HEK293 (cell line): ENCODE measurements at regions of chr12 and their contacts with region 1.

Region 1: GRCh38 chr12:124906606-124907261 is 7.7 kb downstream of the UBC start:
- H3K4me3 ChIP-seq: no peak overlapping the region
- H3K27ac ChIP-seq: no peak overlapping the region
- H3K4me1 ChIP-seq: peaks cover 7% of the 10 kb centered on the region
- CTCF ChIP-seq: peak; percentile 86

Region 2: DNA sequence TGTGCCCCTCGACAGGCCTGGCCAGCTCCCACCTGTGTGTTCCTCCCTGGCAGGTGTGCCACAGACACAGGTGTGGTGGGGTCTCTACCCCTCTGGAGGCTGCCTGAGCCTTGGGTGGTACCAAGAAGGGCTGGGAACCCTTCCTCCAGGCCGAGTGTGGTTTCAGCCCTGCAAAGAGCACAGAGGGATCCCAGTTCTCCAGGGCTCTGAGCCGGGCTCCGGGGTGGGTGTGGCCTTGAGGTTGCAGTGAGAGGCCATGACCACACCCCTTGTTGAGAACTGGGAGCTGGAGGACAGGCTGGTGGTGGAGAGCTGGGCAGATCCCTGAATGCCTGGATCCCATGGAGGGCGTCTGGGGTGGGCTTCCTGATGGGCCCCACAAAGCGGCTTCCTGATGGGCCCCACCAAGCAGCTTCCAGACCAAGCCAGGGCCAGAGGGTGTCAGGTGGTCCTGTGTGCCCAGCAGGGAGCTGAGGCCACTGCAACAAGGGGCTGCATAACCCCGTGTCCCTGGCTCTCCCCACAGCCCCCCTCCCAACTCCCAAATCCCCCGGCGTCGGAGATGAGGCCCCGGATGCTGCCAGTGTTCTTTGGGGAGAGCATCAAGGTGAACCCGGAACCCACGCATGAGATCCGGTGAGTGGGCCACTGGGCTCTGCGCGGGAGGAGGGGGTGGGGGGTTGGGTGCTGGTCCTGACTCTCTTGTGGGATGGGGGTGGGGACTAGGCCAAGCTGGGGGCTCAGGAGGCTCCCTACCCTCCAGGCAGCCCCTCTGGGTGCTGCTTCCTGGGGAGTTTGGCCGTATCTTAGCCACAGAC is 595.2 kb before region 1 on chr12:
- CTCF ChIA-PET with region 1: no interaction called
- POLR2A ChIA-PET with region 1: interaction called, 11 read pairs
- H3K4me3 ChIP-seq: no peak overlapping the region
- H3K27ac ChIP-seq: no peak overlapping the region
- H3K4me1 ChIP-seq: no peaks in the 10 kb centered on the region
- CTCF ChIP-seq: no peak

Region 3: DNA sequence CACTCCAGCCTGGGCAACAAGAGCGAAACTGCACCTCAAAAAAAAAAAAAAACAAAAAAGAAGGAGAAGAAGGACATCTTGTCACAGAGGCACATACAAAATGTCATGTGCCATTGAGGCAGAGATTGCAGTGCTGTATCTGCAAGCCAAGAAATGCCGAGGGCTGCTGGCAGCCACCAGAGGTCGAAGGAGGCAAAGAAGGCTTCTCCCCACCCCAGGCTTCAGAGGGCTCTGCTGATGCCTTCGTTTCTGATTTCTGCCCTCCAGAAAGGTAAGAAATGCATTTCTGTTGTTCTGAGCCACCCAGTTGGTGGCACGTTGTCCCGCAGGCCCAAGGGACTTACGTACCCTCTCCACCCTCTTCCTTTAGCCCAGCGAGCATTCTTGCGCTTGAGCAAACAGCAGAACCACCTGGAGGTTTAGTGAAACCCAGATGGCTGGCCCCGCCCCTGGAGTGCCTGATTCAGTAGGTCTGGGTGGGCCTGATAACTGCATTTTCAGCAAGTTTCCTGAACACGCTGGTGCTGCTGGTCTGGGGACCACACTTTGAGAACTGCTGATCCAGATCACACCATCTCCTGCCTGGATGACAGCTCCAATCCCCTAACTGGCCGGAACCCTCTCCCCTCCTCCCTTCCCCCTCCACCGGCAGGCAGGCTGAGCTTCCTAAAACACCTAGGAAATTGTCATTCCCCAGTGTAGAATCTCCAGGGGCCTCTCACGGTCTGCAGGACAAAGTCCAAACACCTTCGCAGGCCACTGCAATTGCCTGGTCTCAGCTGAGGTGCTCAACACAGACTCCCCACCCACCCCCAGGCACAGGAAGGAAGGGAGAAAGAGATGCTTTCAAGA is 21.9 kb before region 1 on chr12:
- CTCF ChIA-PET with region 1: interaction called, 15 read pairs
- POLR2A ChIA-PET with region 1: no interaction called
- H3K4me3 ChIP-seq: no peak overlapping the region
- H3K27ac ChIP-seq: no peak overlapping the region
- H3K4me1 ChIP-seq: no peaks in the 10 kb centered on the region
- CTCF ChIP-seq: no peak

Region 4: GRCh38 chr12:124917135-124917840 is 10.6 kb after region 1 on chr12:
- CTCF ChIA-PET with region 1: interaction called, 8 read pairs
- POLR2A ChIA-PET with region 1: interaction called, 13 read pairs
- H3K4me3 ChIP-seq: peak overlapping the region; percentile 38
- H3K27ac ChIP-seq: peak overlapping the region; percentile 77
- H3K4me1 ChIP-seq: peaks cover 24% of the 10 kb centered on the region
- CTCF ChIP-seq: no peak

Region 5: DNA sequence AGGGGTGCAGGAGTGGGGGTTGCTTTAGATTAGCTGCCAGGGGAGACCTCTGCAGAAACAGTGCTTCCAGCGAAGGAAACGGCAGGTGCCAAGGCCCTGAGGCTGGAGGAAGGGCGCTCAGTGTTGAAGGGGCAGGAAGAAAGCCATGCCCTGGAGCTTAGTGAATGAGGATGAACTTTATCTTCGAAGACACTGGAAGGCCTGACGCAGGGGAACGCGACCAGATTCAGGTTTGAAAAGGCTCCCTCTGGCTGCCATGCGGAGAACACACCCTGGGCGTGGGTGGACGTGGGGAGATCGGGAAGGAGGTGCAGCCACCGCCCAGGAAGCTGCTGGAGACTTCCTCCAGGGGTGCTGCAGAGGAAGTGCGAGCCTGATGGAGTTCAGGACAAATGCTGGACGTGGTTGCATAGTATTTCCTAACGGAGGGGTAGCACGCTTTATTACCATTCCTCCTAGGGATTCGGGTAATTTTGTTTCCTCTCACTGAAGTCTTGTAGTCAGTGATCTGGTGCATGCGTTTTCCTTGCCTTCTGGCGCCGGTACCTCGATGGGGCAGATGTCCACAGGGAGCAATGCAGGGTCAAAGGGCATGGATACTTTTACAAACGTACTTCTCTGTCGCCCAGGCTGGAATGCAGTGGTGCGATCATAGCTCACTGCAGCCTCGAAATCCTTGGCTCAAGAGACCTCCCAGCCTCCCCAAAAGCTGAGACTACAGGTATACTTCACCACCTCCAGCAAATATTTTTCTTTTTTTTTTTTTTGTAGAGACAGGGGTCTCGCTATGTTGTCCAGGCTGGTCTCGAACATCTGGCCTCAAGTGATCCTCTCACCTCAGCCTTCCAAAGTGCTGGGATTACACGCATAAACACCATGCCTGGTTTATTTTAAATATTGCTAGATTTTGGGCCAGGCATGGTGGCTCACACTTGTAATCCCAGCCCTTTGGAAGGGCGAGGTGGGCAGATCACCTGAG is 34.1 kb after region 1 on chr12:
- CTCF ChIA-PET with region 1: interaction called, 48 read pairs
- POLR2A ChIA-PET with region 1: interaction called, 9 read pairs
- H3K4me3 ChIP-seq: peak overlapping the region; percentile 34
- H3K27ac ChIP-seq: peak overlapping the region; percentile 72
- H3K4me1 ChIP-seq: peaks cover 4% of the 10 kb centered on the region
- CTCF ChIP-seq: peak; percentile 99